Thyroid gland (tissue), 4 donors: ENCODE measurements at regions of chr6 and their contacts with region 1.

Region 1: DNA sequence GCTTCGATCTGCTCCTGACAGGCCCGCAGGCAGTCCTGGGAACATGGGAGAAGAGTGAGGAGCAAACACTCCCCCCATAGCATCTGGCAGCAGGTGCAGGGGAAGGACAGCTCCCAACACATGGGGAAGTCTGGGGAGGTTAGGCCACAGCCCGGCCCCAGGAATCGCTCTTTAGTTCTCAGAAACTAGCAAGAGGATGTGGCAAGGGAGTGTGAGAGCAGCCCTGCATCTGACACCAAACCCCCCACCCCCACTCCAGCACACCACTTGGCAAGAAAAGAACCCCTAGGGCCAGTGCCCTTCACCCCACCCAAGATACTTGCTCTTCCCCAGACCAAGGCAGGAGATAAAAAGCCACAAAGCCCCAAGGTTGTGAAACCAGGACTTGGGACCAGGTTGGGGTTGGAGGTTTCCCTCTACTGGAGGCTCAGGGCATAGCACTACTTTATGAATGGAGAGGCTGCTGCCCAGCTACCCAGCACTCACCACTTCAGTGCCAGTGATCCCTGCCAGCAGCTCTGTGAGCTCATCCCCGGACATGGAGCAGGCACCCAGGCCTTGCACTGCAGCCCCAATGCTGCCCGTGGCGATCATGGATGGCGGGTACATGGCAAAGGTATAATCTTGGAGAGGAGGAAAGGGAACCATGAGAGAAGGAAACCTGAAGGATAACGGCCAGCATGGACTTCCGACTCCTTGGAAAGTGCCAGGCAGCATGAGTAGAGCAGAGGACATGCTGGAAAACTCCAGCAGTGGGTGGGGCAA is 5.4 kb downstream of the CCND3 start:
- DNase-seq: peak; percentile 83
- H3K4me3 ChIP-seq: no peak overlapping the region
- H3K27ac ChIP-seq: no peak overlapping the region
- H3K4me1 ChIP-seq: peaks cover 14 to 33% of the 10 kb centered on the region in 2 donors
- H3K27me3 ChIP-seq: no peaks in the 10 kb centered on the region
- CTCF ChIP-seq: peak; percentile 53 to 88 (median 74)
- POLR2A ChIP-seq: no peak

Region 2: DNA sequence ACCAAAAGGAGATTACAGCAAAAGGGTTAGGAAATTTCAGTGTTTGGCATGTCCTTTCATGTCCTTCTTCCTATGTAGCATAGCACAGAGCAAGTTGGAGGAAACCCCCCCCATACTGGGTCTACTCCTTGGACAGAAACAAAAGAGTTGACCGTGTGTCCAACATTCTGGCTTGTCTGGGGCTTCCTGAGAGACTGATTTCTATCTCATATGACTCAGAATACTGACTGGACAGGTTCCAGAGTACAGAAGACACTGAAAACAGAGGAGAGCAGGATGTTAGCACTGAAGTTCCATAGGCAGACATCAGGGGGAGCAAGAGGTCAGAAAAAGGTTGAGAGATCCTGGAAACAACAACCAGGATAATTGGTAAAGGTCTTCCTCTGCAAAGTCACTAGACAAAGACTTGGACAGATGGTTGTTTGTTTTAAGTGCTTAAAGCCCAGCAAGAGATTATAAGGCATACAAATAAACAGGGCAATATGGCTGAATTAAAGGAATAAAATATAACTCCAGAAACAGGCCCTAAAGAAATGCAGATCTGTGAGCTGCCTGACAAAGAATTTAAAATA is 89.5 kb before region 1 on chr6:
- intact Hi-C with region 1: loop called (anchors 5 kb)
- DNase-seq: peak; percentile 66 to 68
- H3K4me3 ChIP-seq: no peak overlapping the region
- H3K27ac ChIP-seq: peak overlapping the region in 2 of 3 donors; percentile 11 to 18
- H3K4me1 ChIP-seq: peaks cover 0 to 7% of the 10 kb centered on the region in 2 donors
- H3K27me3 ChIP-seq: no peaks in the 10 kb centered on the region
- CTCF ChIP-seq: peak; percentile 48 to 94 (median 84)
- POLR2A ChIP-seq: no peak